Dorsolateral prefrontal cortex (tissue), 120 donors: ENCODE measurements at regions of chr4 and their contacts with region 1.

Region 1: GRCh38 chr4:125314676-125315575 is at the start of gene FAT4:
- DNase-seq: peak; percentile 39 to 93 (median 90)
- H3K4me3 ChIP-seq: peak within 1 kb of the TSS; percentile 65 to 96 (median 85)
- H3K27ac ChIP-seq: peak within 1 kb of the TSS; percentile 77 to 96 (median 92)
- H3K27me3 ChIP-seq: peaks cover 0 to 22% (median 0%) of the 10 kb centered on the region in 45 donors
- CTCF ChIP-seq: peak in 52 of 56 donors; percentile 17 to 68 (median 49)
- total RNA-seq, gene FAT4: 3.9 to 15.1 (median 7.6) TPM

Region 2: DNA sequence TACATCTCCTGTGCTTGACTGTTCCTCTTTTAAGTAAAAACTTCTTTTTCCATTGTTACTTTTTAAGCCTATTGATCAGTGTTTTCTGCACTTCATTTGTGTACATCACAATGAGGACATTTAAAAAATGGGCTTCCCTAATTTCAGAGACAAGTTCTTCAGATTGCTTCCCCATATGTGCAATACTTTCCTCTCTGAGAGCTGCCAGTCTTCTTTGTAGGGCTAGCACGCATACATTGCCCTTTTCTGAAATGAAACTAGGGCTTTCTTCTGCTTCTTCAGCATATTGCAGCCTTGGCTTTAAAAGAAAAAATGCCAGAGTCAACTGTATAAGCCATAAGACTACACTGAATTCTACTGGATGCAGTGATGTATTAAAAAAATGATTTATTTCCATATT is 37.6 kb after region 1 on chr4:
- intact Hi-C with region 1: loop called in 1 of 2 experiments (anchors 5 kb)
- DNase-seq: no peak
- H3K4me3 ChIP-seq: peak overlapping the region in 43 of 59 donors; percentile 0 to 56 (median 32)
- H3K27ac ChIP-seq: peak overlapping the region in 58 of 59 donors; percentile 16 to 97 (median 86)
- H3K27me3 ChIP-seq: no peaks in the 10 kb centered on the region
- CTCF ChIP-seq: no peak

Region 3: DNA sequence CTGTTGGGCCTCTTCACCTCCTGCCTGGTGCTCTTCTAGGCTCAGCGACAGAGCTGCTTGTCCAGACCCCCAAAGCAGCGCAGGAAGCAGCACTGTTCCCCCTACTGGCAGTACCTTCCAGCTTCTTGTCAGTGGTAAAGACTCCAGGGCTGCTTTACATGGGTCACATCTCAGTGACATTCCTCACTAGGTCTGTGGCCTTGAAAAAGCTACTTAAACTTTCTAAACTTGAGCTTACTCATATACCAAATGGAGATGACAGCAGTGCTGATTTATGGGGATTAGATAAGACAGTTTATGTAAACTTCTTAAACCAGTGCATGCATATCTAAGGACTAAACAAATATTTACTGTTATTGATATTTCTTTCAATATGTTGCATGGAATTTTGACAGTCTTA is 117.2 kb after region 1 on chr4:
- intact Hi-C with region 1: loop called (anchors 2 to 5 kb)
- DNase-seq: peak in 3 of 10 donors; percentile 27 to 55 (median 51)
- H3K4me3 ChIP-seq: no peak overlapping the region
- H3K27ac ChIP-seq: no peak overlapping the region
- H3K27me3 ChIP-seq: no peaks in the 10 kb centered on the region
- CTCF ChIP-seq: peak in 49 of 56 donors; percentile 12 to 70 (median 38)

Region 4: DNA sequence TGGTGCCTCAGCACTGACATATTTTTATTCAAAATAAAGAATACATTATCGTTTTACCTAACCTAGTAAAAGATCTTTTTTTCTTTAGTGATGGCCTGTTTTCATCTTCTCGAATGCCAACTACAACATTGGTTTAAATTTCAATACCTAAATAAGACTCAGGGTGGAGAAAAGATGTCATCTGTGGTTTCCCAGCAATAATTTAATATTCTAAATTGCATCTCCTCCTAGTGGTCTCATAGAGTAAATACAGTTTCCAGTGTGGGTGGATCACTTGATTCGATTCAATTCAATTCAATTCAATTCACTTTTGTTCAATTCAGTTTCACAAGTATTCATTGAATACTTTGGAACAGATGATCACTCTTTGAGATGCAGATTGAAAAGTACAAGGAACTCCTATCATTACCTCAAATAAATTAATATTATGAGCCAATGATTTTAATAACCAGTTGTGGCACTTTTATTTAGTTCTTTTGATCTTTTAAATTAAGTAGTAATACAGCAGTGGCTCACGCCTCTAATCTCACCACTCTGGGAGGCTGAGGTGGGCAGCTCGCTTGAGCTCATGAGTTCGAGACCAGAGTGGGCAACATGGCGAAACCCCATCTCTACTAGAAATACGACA is 427.0 kb after region 1 on chr4:
- intact Hi-C with region 1: loop called (anchors 5 kb)
- DNase-seq: no peak
- H3K4me3 ChIP-seq: no peak overlapping the region
- H3K27ac ChIP-seq: no peak overlapping the region
- H3K27me3 ChIP-seq: no peaks in the 10 kb centered on the region
- CTCF ChIP-seq: peak in 54 of 56 donors; percentile 21 to 64 (median 48)

Region 5: GRCh38 chr4:125750828-125751466 is 436.0 kb after region 1 on chr4:
- intact Hi-C with region 1: loop called in 1 of 2 experiments (anchors 5 kb)
- DNase-seq: peak in 1 of 10 donors; percentile 17
- H3K4me3 ChIP-seq: no peak overlapping the region
- H3K27ac ChIP-seq: no peak overlapping the region
- H3K27me3 ChIP-seq: no peaks in the 10 kb centered on the region
- CTCF ChIP-seq: peak in 51 of 56 donors; percentile 11 to 72 (median 46)

Region 6: GRCh38 chr4:126051689-126052424 is 736.9 kb after region 1 on chr4:
- intact Hi-C with region 1: loop called in 1 of 2 experiments (anchors 10 kb)
- DNase-seq: peak in 3 of 10 donors; percentile 33 to 43 (median 42)
- H3K4me3 ChIP-seq: peak overlapping the region in 1 of 59 donors; percentile 1
- H3K27ac ChIP-seq: peak overlapping the region in 37 of 59 donors; percentile 4 to 78 (median 52)
- H3K27me3 ChIP-seq: no peaks in the 10 kb centered on the region
- CTCF ChIP-seq: peak in 47 of 56 donors; percentile 8 to 64 (median 38)

Region 7: GRCh38 chr4:126604268-126604867 is 1289.4 kb after region 1 on chr4:
- intact Hi-C with region 1: loop called (anchors 5 to 10 kb)
- DNase-seq: peak in 2 of 10 donors; percentile 48 to 49
- H3K4me3 ChIP-seq: no peak overlapping the region
- H3K27ac ChIP-seq: no peak overlapping the region
- H3K27me3 ChIP-seq: peaks cover 0 to 3% (median 0%) of the 10 kb centered on the region in 45 donors
- CTCF ChIP-seq: peak; percentile 47 to 83 (median 69)